ENCODE measurements at regions of chr1 and their contacts with region 1.

Region 1: DNA sequence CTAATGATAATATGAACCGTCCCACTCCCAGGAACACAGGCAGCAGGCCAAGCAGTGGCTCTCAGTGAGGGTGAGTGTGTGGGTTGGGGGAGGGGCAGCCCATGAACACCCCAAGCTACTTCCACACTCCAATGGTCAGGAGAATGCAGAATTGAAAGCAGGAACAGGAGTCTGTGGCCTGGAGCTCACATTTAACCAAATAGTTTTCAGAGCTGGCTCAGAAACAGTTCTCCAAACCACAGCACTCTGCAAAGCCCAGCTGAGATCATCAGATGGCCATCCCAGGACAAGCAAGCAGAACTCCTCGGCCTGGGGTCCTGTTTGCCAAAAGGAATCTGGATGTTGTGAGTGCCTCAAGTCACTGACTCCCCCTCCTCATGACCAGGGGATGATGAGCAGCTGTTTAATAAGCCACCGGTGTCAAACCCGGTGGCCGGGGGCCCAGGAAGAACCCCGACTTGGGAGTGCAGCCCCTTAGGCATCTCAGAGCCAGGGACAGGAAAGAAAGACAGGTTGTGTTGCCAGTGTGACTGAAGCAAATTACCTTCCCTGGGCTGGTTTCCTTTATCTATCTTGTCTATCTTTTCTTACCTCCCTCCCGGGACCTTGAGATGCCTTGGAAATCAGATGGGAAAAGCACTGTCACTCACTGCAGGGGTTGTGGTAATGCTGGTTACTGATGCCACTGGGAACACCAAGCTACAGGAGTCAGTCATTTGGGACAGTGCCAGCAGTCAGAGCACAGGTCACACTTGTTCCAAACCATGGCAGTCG is 20.4 kb downstream of the DEGS1 start:
- DNase-seq: no peak
- H3K4me3 Mint-ChIP-seq: peak overlapping the region; percentile 5
- H3K27ac Mint-ChIP-seq: no peak overlapping the region
- H3K4me1 Mint-ChIP-seq: peaks cover 13% of the 10 kb centered on the region
- H3K27me3 Mint-ChIP-seq: no peaks in the 10 kb centered on the region

Region 2: GRCh38 chr1:224188286-224188685 is 15.1 kb before region 1 on chr1:
- intact Hi-C with region 1: loop called (anchors 1 kb)
- DNase-seq: no peak
- H3K4me3 Mint-ChIP-seq: peak overlapping the region; percentile 28
- H3K27ac Mint-ChIP-seq: peak overlapping the region; percentile 73
- H3K4me1 Mint-ChIP-seq: peaks cover 45% of the 10 kb centered on the region
- H3K27me3 Mint-ChIP-seq: no peaks in the 10 kb centered on the region

Measured in activated CD4-positive, alpha-beta T cell treated with anti-CD3 and anti-CD28 coated beads, Interleukin-2, amount 10 ng/mL, durations not matched to agents 24 days and 14 days (primary cell).